Caco-2 (cell line): ENCODE measurements at regions of chr7 and their contacts with region 1.

Region 1: GRCh38 chr7:66013916-66014315 is 31.9 kb upstream of the GUSB start:
- DNase-seq: peak; percentile 67 to 76
- H3K4me3 ChIP-seq: no peak overlapping the region
- H3K4me3 Mint-ChIP-seq: no peak overlapping the region
- H3K27ac Mint-ChIP-seq: no peak overlapping the region
- H3K4me1 ChIP-seq: peaks cover 4% of the 10 kb centered on the region
- H3K4me1 Mint-ChIP-seq: peaks cover 4% of the 10 kb centered on the region
- H3K27me3 ChIP-seq: no peaks in the 10 kb centered on the region
- H3K27me3 Mint-ChIP-seq: no peaks in the 10 kb centered on the region
- CTCF ChIP-seq: peak in 1 of 2 experiments; percentile 75

Region 2: DNA sequence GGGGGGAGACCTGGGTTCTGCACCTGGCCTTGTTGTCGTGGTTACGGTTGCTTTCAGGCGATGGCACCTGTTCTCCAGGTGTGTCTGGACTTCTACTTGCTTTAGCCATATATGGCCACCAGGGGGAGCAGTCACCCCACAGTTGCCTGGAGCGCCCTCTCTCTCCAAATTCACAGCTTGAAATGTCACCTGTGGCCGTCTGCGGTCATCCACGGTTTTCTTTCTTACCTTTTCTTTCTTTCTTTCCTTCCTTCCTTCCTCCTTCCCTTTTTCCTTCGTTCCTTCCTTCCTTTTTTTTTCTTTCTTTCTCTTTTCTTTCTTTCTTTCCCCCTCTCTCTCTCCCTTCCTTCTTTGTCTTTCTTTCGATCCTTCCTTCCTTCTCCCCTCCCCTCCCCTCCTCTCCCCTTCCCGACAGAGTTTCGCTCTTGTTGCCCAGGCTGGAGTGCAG is 291.5 kb before region 1 on chr7:
- CTCF ChIA-PET with region 1: no interaction called
- POLR2A ChIA-PET with region 1: no interaction called
- intact Hi-C with region 1: loop called (anchors 5 kb)
- DNase-seq: peak; percentile 76 to 85
- H3K4me3 ChIP-seq: no peak overlapping the region
- H3K4me3 Mint-ChIP-seq: no peak overlapping the region
- H3K27ac Mint-ChIP-seq: no peak overlapping the region
- H3K4me1 ChIP-seq: no peaks in the 10 kb centered on the region
- H3K4me1 Mint-ChIP-seq: no peaks in the 10 kb centered on the region
- H3K27me3 ChIP-seq: no peaks in the 10 kb centered on the region
- H3K27me3 Mint-ChIP-seq: no peaks in the 10 kb centered on the region
- CTCF ChIP-seq: peak; percentile 79 to 88

Region 3: GRCh38 chr7:65981965-65982792 is 31.7 kb before region 1 on chr7 and contains the start of gene GUSB:
- CTCF ChIA-PET with region 1: interaction called, 3 read pairs
- POLR2A ChIA-PET with region 1: no interaction called
- intact Hi-C with region 1: loop called (anchors 2 kb)
- DNase-seq: peak; percentile 92 to 95
- H3K4me3 ChIP-seq: peak within 1 kb of the TSS; percentile 68
- H3K4me3 Mint-ChIP-seq: peak within 1 kb of the TSS; percentile 67
- H3K27ac Mint-ChIP-seq: peak within 1 kb of the TSS; percentile 23
- H3K4me1 ChIP-seq: peaks cover 9% of the 10 kb centered on the region
- H3K4me1 Mint-ChIP-seq: no peaks in the 10 kb centered on the region
- H3K27me3 ChIP-seq: no peaks in the 10 kb centered on the region
- H3K27me3 Mint-ChIP-seq: no peaks in the 10 kb centered on the region
- CTCF ChIP-seq: no peak
- total RNA-seq, gene GUSB: 71.3 and 80.0 TPM in 2 replicates